ENCODE measurements at regions of chr9 and their contacts with region 1.

Region 1: DNA sequence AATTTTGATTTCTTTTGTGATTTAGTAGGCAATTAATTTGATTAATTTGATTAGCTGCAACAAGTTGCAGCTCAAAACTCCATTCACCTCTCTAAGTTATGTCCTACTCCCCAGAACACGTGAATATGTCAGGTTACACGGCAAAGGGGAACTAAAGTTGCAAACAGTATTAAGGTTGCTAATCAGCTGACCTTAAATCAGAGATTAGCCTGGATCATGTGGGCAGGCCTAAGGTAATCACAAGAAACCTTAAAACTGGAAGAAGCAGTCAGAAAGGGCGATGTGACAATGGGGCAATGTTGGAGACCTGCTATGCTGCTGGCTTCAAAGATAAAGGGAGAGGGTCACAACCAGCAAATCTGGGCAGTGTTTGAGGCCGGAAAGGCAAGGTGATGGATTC is 47.3 kb upstream of the ANXA1 start:
- DNase-seq: no peak
- ATAC-seq: no peak
- H3K4me3 Mint-ChIP-seq: no peak overlapping the region
- H3K27ac Mint-ChIP-seq: no peak overlapping the region
- H3K4me1 Mint-ChIP-seq: no peaks in the 10 kb centered on the region
- H3K27me3 Mint-ChIP-seq: no peaks in the 10 kb centered on the region

Region 2: GRCh38 chr9:73093740-73094379 is 10.5 kb before region 1 on chr9:
- CTCF ChIA-PET with region 1: interaction called, 10 read pairs
- DNase-seq: no peak
- ATAC-seq: peak; percentile 42
- H3K4me3 Mint-ChIP-seq: peak overlapping the region; percentile 20
- H3K27ac Mint-ChIP-seq: no peak overlapping the region
- H3K4me1 Mint-ChIP-seq: peaks cover 2% of the 10 kb centered on the region
- H3K27me3 Mint-ChIP-seq: no peaks in the 10 kb centered on the region

Region 3: GRCh38 chr9:73116031-73116430 is 11.7 kb after region 1 on chr9:
- CTCF ChIA-PET with region 1: interaction called, 10 read pairs
- DNase-seq: no peak
- ATAC-seq: peak; percentile 93
- H3K4me3 Mint-ChIP-seq: no peak overlapping the region
- H3K27ac Mint-ChIP-seq: no peak overlapping the region
- H3K4me1 Mint-ChIP-seq: peaks cover 34% of the 10 kb centered on the region
- H3K27me3 Mint-ChIP-seq: no peaks in the 10 kb centered on the region

Region 4: DNA sequence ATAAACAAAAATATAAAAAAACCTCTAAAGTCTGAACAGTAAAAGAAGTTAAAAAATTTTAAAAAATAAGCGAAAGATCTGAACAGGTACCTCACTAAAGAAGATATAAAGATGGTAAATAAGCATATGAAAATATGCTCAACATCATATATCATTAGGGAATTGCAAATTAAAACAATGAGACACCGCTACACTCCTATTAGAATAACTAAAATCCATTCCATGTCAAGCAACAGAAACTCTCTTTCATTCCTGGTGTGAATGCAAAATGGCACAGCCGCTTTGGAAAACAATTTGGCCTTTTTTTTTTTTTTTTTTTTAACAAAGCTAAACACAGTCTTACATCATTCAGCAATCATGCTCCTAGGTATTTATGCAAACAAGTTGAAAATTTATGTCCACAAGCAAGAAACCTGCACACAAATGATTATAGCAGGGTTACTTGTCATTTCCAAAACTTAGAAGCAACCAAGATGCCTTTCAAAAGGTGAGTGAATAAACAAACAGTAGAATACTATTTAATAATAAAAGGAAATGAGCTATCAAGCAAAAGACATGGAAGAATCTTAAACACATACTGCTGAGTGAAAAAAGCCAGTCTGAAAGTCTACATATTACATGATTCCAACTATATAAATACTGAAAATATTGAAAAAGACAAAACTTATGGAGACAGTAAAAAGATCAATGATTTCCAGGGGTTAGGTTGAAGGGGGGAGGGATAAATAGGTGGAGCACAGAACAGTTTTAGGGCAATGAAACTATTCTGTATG is 69.4 kb after region 1 on chr9:
- CTCF ChIA-PET with region 1: interaction called, 70 read pairs
- DNase-seq: no peak
- ATAC-seq: peak; percentile 10
- H3K4me3 Mint-ChIP-seq: no peak overlapping the region
- H3K27ac Mint-ChIP-seq: no peak overlapping the region
- H3K4me1 Mint-ChIP-seq: no peaks in the 10 kb centered on the region
- H3K27me3 Mint-ChIP-seq: no peaks in the 10 kb centered on the region

Measured in activated CD8-positive, alpha-beta memory T cell treated with anti-CD3 and anti-CD28 coated beads, Interleukin-2, amount 10 ng/mL, durations not matched to agents 7 days and 5 days (primary cell).